ENCODE measurements at regions of chr10 and their contacts with region 1.

Region 1: DNA sequence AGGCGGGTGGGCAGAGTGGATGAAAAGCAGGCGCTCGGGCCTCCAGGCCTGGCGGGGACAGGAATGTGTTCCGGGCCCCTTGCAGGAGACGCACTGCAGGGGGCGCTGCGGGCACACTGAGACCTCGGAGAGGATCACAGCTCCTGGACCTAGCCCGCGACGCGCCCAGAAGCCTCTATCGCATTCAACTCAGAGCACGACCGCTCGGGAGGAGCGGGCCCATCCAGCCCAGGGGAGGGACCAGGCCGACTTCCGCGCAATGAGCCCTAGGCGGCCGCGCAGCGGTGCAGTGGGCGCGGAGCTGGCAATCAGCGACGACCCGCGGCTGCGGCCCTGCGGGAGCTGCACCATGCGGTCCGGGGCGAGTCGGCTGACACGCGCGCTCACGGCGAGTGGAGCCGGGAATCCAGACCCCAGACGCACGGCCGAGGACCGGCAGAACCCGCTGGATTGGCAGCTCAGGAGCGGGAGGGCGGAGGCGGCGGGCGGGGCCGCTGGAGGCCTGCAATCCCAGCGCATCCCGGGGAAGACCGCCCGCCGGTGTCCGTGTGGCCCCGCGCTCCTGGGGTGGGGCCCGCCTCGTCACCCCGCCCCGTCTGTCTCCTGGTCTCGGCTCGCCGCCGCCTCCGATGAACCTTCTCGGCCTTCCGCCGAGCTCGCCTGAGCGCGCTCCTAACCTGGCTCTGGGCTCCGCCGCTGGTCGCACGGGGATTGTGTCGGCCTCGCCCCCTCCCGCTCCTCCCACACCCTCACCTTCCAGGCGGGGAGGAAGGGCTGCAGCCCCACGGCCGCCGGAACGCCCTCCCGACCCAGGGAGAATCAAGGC is 33.5 kb upstream of the GRID1 start:
- DNase-seq: peak; percentile 88
- H3K4me3 Mint-ChIP-seq: peak overlapping the region; percentile 85
- H3K27ac Mint-ChIP-seq: peak overlapping the region; percentile 92
- H3K4me1 Mint-ChIP-seq: peaks cover 22% of the 10 kb centered on the region
- H3K27me3 Mint-ChIP-seq: peaks cover 15% of the 10 kb centered on the region

Region 2: DNA sequence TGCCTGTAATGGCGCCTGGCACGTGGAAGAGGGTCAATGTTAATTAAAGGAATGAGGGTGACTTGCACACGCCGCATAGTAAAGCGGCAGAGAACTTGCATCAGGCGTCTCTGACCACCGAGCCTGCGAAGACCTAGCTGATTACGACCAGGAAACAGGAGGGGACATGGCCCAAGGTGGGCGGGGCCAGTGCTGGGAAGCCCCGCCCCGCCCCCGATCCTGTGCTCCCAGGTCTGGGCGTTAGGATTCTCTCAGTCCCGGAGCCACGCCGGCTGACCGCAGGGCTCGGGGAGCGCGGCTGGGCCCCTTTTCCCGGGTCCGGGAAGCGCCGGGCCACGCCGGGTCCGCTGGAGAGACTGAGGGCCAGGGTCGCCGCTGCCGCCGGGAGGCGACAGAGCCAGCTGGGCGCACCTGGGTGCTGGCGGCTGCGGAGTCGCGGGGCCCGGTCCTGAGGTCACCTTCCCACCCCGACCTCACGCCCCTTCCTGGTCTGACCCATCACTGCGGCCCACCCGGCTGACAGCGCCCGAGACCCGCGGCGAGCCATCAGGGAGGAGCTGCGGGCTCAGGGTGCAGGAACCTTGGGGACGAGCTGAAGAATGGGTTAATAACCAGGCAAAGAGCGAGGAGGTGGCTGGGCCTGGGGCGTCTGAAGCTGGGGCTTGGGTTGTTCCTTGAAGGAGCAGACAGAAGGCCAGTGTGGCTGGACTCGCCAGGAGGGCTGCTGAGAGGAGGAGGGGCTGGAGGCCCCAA is 10.5 kb before region 1 on chr10:
- intact Hi-C with region 1: loop called (anchors 1 kb)
- DNase-seq: no peak
- H3K4me3 Mint-ChIP-seq: peak overlapping the region; percentile 79
- H3K27ac Mint-ChIP-seq: no peak overlapping the region
- H3K4me1 Mint-ChIP-seq: no peaks in the 10 kb centered on the region
- H3K27me3 Mint-ChIP-seq: peaks cover 69% of the 10 kb centered on the region

Region 3: DNA sequence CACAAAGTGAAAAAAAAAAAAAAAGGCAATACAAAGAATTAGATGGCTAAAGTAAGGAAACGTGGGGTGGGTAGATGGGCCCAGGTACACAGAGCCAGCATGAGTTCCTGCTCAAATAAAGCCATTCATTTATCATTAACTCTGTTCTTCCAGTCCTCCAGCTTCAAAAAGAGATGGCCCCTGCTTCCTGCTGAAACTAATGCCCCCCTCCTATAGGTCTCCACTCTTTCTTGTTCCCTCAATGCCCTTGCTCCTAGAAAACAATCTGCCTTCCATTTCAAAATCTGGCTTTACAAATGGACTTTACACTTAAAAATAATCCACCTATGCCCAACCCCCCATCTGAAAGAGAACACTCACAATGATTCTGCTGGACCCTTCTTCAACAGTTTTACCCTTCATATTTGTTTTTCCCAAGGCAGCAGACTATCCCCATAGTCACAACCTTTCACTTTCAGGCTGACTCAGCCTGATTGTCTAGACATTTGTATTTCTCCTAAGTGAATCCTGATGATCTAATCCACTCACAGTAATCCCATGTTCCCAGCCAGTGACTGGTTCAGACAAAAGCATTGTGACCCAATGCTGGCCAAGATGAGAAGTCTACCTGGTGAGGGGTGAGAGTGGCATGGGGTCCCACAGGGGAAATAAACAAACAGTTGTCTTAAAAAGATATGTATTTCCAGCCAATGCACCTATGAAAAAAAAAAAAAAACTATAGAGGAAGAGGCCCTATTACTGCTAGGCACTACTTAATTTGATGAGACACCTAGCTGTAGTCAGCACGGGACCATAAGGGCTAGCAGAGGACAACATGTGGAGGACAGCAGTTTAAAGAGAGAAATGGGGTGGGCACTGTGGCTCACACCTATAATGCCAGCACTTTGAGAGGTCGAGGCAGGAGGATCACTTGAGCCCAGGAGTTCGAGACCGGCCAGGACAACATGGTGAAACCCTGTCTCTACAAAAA is 41.1 kb after region 1 on chr10:
- intact Hi-C with region 1: loop called (anchors 1 kb)
- DNase-seq: no peak
- H3K4me3 Mint-ChIP-seq: no peak overlapping the region
- H3K27ac Mint-ChIP-seq: peak overlapping the region; percentile 54
- H3K4me1 Mint-ChIP-seq: peaks cover 31% of the 10 kb centered on the region
- H3K27me3 Mint-ChIP-seq: no peaks in the 10 kb centered on the region

Region 4: GRCh38 chr10:86585037-86585725 is 185.1 kb after region 1 on chr10:
- intact Hi-C with region 1: loop called (anchors 1 kb)
- DNase-seq: peak; percentile 67
- H3K4me3 Mint-ChIP-seq: no peak overlapping the region
- H3K27ac Mint-ChIP-seq: no peak overlapping the region
- H3K4me1 Mint-ChIP-seq: no peaks in the 10 kb centered on the region
- H3K27me3 Mint-ChIP-seq: no peaks in the 10 kb centered on the region

Region 5: GRCh38 chr10:86755740-86756510 is 355.8 kb after region 1 on chr10:
- intact Hi-C with region 1: loop called (anchors 5 kb)
- DNase-seq: peak; percentile 86
- H3K4me3 Mint-ChIP-seq: peak overlapping the region; percentile 86
- H3K27ac Mint-ChIP-seq: peak overlapping the region; percentile 86
- H3K4me1 Mint-ChIP-seq: peaks cover 52% of the 10 kb centered on the region
- H3K27me3 Mint-ChIP-seq: peaks cover 38% of the 10 kb centered on the region

Measured in activated T-helper 1 cell treated with anti-CD3 and anti-CD28 coated beads, Interleukin-12 subunit alpha, Interleukin-12 subunit beta, Interleukin-2, Interleukin-4 antibody, amounts not matched to agents 30 ng/mL and 10 ng/mL and 1 ng/mL, durations not matched to agents 14 hours and 24 hours and 36 hours (primary cell).